Activated naive CD4-positive, alpha-beta T cell treated with anti-CD3 and anti-CD28 coated beads for 36 hours (primary cell): ENCODE measurements at regions of chr15 and their contacts with region 1.

Region 1: GRCh38 chr15:72532991-72533601 is 59.0 kb downstream of the ARIH1 start:
- DNase-seq: peak; percentile 36
- H3K4me3 Mint-ChIP-seq: no peak overlapping the region
- H3K27ac Mint-ChIP-seq: no peak overlapping the region
- H3K4me1 Mint-ChIP-seq: peaks cover 47% of the 10 kb centered on the region
- H3K27me3 Mint-ChIP-seq: no peaks in the 10 kb centered on the region

Region 2: GRCh38 chr15:72495007-72495406 is 38.1 kb before region 1 on chr15:
- CTCF ChIA-PET with region 1: no interaction called
- intact Hi-C with region 1: loop called (anchors 5 kb)
- DNase-seq: no peak
- H3K4me3 Mint-ChIP-seq: no peak overlapping the region
- H3K27ac Mint-ChIP-seq: no peak overlapping the region
- H3K4me1 Mint-ChIP-seq: peaks cover 63% of the 10 kb centered on the region
- H3K27me3 Mint-ChIP-seq: no peaks in the 10 kb centered on the region